ENCODE measurements at regions of chr4 and their contacts with region 1.

Region 1: GRCh38 chr4:157045507-157046127 is 30.3 kb upstream of the GLRB start:
- DNase-seq: peak; percentile 66
- H3K4me3 ChIP-seq: no peak overlapping the region
- H3K27ac ChIP-seq: no peak overlapping the region
- H3K4me1 ChIP-seq: peaks cover 0 to 5% (median 0%) of the 10 kb centered on the region in 4 donors
- H3K27me3 ChIP-seq: no peaks in the 10 kb centered on the region
- CTCF ChIP-seq: peak; percentile 41 to 77 (median 64)
- EP300 ChIP-seq: no peak
- POLR2A ChIP-seq: no peak

Region 2: DNA sequence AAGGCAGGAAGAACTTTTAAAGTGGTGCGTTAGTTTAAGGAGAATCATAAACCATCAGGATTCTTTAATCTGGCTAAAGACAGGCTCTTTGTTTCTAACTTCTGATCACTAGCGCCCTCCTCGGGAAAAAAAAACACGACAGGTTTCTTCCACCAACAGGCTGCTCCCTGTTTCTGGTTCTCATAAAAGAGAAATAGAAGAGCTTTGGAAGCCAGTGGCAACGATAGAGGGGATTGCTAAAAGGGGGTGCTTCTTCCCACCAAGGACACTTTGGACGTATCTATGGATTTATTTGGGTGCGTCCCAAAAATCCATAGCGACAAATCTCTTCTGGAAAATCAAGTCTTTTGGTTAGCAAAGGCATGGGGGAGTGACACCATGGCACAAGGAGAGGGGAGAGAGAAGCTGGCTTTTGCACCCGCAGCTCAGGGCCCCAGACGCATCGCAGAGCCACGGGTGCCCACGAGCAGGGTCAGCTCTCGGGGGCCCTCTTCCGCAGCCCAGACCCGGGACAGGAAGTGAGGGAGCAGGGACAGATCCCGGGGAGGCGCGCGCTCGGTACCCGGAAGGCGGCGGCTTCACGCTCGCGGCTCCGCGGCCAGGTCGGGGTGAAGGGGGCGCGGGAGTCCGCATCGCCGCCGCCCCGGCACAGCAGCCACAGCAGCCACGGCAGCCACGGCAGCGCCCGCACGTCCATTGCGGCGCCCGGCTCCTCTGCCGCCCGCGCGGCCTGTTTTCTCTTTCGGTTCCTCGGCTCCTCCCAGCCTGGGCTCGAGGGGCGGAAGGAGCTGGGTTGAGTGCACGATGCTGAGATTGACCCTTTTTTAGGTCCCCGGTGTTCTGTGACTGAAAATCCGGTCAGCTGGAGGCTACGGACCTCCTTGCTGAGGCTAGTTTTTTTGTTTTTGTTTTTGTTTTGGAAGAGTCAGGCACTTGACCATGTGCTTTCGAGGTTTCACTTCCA is 1092.2 kb before region 1 on chr4 and contains the start of gene CTSO:
- intact Hi-C with region 1: loop called (anchors 10 kb)
- DNase-seq: peak; percentile 88
- H3K4me3 ChIP-seq: peak within 1 kb of the TSS; percentile 71 to 90 (median 80)
- H3K27ac ChIP-seq: peak within 1 kb of the TSS; percentile 96 to 99 (median 98)
- H3K4me1 ChIP-seq: peaks cover 0 to 25% (median 22%) of the 10 kb centered on the region in 4 donors
- H3K27me3 ChIP-seq: no peaks in the 10 kb centered on the region
- CTCF ChIP-seq: peak; percentile 41 to 61 (median 56)
- EP300 ChIP-seq: no peak
- POLR2A ChIP-seq: no peak
- total RNA-seq, gene CTSO: 26.0 to 41.4 (median 28.9) TPM

Region 3: DNA sequence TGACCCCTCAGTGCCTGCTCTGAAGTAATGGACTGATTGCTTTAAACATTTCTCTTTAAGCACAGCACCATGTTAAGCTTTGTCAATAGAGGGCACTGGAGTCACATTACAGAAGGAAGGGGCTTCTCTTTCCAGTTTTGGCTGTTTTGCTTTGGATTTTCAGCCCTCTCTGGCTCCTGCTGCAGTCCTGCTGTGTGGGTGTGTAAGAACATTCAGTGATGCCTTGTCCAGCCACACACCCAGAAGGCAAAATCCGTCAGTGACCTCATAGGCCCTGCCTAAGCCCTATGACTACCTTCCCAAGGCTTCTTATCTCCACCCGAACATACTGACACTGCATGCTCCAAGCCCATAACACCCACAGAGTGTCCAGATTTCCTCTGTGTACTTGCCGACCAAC is 876.6 kb before region 1 on chr4:
- intact Hi-C with region 1: loop called (anchors 5 kb)
- DNase-seq: peak; percentile 61
- H3K4me3 ChIP-seq: no peak overlapping the region
- H3K27ac ChIP-seq: peak overlapping the region in 1 of 4 donors; percentile 16
- H3K4me1 ChIP-seq: peaks cover 0 to 12% (median 4%) of the 10 kb centered on the region in 4 donors
- H3K27me3 ChIP-seq: no peaks in the 10 kb centered on the region
- CTCF ChIP-seq: peak in 1 of 4 experiments; percentile 39
- EP300 ChIP-seq: no peak
- POLR2A ChIP-seq: no peak

Region 4: GRCh38 chr4:156771171-156771837 is 274.3 kb before region 1 on chr4:
- intact Hi-C with region 1: loop called (anchors 10 kb)
- DNase-seq: no peak
- H3K4me3 ChIP-seq: peak overlapping the region; percentile 2 to 29 (median 17)
- H3K27ac ChIP-seq: peak overlapping the region; percentile 50 to 74 (median 55)
- H3K4me1 ChIP-seq: peaks cover 0 to 76% (median 38%) of the 10 kb centered on the region in 4 donors
- H3K27me3 ChIP-seq: no peaks in the 10 kb centered on the region
- CTCF ChIP-seq: no peak
- EP300 ChIP-seq: no peak
- POLR2A ChIP-seq: no peak

Region 5: GRCh38 chr4:157978680-157979361 is 933.2 kb after region 1 on chr4:
- intact Hi-C with region 1: loop called (anchors 5 kb)
- DNase-seq: no peak
- H3K4me3 ChIP-seq: no peak overlapping the region
- H3K27ac ChIP-seq: no peak overlapping the region
- H3K4me1 ChIP-seq: no peaks in the 10 kb centered on the region
- H3K27me3 ChIP-seq: no peaks in the 10 kb centered on the region
- CTCF ChIP-seq: peak; percentile 63 to 90 (median 80)
- EP300 ChIP-seq: no peak
- POLR2A ChIP-seq: no peak

Measured in sigmoid colon (tissue), 7 donors.